ENCODE measurements at regions of chr20 and their contacts with region 1.

Region 1: DNA sequence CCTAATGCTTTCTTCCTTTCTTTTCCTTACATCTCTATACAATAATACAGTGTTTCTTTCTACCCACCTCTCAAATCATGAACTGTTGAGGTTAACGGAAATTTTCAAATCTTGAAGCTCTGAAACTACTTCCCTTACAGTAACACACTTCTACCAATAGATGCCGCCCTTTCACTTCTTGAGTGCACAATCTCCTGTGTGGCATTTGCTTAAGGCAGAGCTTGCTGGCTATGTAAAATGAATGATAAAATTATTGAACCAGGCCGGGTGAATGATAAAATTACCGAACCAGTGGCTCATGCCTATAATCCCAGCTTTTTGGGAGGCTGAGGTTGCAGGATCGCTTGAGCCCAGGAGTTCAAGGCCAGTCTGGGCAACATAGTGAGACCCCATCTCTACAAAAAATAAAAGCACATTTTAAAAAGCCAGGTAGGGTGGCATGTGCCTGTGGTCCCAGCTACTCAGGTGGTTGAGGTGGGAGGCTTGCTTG is 56.8 kb downstream of the KCNS1 start:
- DNase-seq: peak in 1 of 2 donors; percentile 83
- ATAC-seq: peak; percentile 92
- H3K4me3 ChIP-seq: no peak overlapping the region
- H3K4me3 Mint-ChIP-seq: no peak overlapping the region
- H3K27ac ChIP-seq: no peak overlapping the region
- H3K27ac Mint-ChIP-seq: peak overlapping the region; percentile 39 to 64
- H3K4me1 ChIP-seq: peaks cover 8% of the 10 kb centered on the region
- H3K4me1 Mint-ChIP-seq: peaks cover 59 to 67% of the 10 kb centered on the region in 2 donors
- H3K27me3 ChIP-seq: no peaks in the 10 kb centered on the region
- H3K27me3 Mint-ChIP-seq: no peaks in the 10 kb centered on the region
- CTCF ChIP-seq: peak; percentile 86

Region 2: GRCh38 chr20:45077559-45077958 is 33.4 kb after region 1 on chr20:
- intact Hi-C with region 1: loop called (anchors 5 kb)
- DNase-seq: no peak
- ATAC-seq: no peak
- H3K4me3 ChIP-seq: no peak overlapping the region
- H3K4me3 Mint-ChIP-seq: no peak overlapping the region
- H3K27ac ChIP-seq: no peak overlapping the region
- H3K27ac Mint-ChIP-seq: peak overlapping the region; percentile 38
- H3K4me1 ChIP-seq: peaks cover 7% of the 10 kb centered on the region
- H3K4me1 Mint-ChIP-seq: peaks cover 15 to 39% of the 10 kb centered on the region in 2 donors
- H3K27me3 ChIP-seq: no peaks in the 10 kb centered on the region
- H3K27me3 Mint-ChIP-seq: no peaks in the 10 kb centered on the region
- CTCF ChIP-seq: no peak

Region 3: GRCh38 chr20:45095753-45096371 is 51.7 kb after region 1 on chr20:
- intact Hi-C with region 1: loop called (anchors 1 kb)
- DNase-seq: peak; percentile 30 to 84
- ATAC-seq: peak; percentile 59 to 75 (median 63)
- H3K4me3 ChIP-seq: no peak overlapping the region
- H3K4me3 Mint-ChIP-seq: no peak overlapping the region
- H3K27ac ChIP-seq: no peak overlapping the region
- H3K27ac Mint-ChIP-seq: no peak overlapping the region
- H3K4me1 ChIP-seq: peaks cover 4% of the 10 kb centered on the region
- H3K4me1 Mint-ChIP-seq: peaks cover 0 to 10% of the 10 kb centered on the region in 2 donors
- H3K27me3 ChIP-seq: peaks cover 18% of the 10 kb centered on the region
- H3K27me3 Mint-ChIP-seq: peaks cover 21% of the 10 kb centered on the region in 2 donors
- CTCF ChIP-seq: peak; percentile 68

Region 4: DNA sequence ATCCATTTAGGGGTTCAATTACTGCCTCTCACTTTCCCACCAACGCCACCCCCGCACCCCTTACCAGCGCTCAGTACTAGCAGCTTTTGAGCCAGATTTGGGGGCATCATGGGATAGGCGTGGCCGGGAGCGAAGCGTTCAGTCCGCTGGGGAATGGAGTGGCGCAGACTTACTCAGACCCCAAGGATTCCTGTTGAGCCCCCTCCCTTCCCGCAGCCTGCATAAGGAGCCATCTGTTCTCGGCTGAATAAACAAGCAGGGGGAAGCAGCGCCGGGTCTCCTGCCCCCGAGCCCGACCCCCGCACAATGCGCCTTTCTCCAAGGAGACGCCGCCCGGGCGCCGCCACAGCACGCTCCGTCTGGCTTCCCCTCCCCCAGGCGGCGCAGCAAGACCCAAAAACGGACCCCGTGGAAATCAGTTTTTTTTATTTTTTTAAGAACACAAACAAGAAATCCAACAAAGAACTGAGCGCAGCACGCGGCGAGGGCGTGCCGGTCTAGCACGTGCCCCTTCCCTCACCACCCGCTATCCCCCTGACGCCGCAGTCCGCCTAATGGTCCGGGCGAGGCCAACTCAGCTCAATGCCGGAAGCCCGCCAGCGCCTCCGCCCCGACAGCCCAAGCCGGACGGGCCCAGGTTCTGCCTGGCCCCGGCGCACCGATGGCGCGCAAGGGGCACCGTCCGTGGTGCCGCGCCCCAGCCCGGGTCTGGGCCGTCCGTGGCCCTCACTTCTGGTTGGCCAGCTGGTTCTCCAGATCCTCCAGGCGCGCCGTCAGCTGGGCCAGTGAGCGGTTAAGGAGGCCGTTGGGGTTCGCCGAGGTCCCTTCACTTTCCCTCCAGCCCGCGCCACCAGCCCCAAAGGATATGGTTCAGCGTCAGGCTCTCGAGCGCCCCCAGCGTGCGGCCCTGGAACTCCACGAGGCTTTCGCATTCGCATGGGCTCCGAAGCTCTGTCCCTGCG is 249.2 kb after region 1 on chr20:
- intact Hi-C with region 1: loop called (anchors 2 kb)
- DNase-seq: peak; percentile 75 to 83
- ATAC-seq: peak; percentile 91 to 93 (median 93)
- H3K4me3 ChIP-seq: peak overlapping the region; percentile 23
- H3K4me3 Mint-ChIP-seq: peak overlapping the region; percentile 80
- H3K27ac ChIP-seq: no peak overlapping the region
- H3K27ac Mint-ChIP-seq: no peak overlapping the region
- H3K4me1 ChIP-seq: peaks cover 11% of the 10 kb centered on the region
- H3K4me1 Mint-ChIP-seq: peaks cover 15 to 25% of the 10 kb centered on the region in 2 donors
- H3K27me3 ChIP-seq: peaks cover 10% of the 10 kb centered on the region
- H3K27me3 Mint-ChIP-seq: peaks cover 25 to 41% of the 10 kb centered on the region in 2 donors
- CTCF ChIP-seq: peak; percentile 83

Measured in natural killer cell (primary cell).